Activated B cell treated with CpG ODN at 0.5 μM for 24 hours (primary cell): ENCODE measurements at regions of chr2 and their contacts with region 1.

Region 1: DNA sequence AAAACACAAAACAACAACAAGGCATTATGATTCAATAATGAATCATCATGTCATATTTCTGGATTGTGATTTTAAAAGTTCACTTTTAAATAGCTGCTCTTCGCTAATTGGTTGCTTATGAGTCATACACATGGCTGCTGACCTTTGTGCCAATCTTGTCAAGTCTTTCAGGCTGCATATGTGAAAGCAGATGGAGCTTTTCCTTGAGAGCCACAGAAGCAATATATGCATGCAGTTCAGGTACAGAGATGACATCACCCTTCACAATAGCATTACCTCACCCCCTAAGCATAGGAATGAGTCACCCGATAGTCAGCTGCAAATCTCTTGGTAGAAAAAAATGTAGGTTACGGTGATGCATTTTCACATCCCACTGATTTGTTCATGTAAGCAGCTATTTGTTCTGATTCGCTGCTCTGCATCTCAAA is 27.2 kb downstream of the EIF2AK3 start:
- DNase-seq: no peak
- ATAC-seq: peak; percentile 94
- H3K4me3 Mint-ChIP-seq: peak overlapping the region; percentile 67
- H3K27ac Mint-ChIP-seq: peak overlapping the region; percentile 90
- H3K4me1 Mint-ChIP-seq: peaks cover 89% of the 10 kb centered on the region
- H3K27me3 Mint-ChIP-seq: no peaks in the 10 kb centered on the region
- CTCF ChIP-seq: no peak

Region 2: DNA sequence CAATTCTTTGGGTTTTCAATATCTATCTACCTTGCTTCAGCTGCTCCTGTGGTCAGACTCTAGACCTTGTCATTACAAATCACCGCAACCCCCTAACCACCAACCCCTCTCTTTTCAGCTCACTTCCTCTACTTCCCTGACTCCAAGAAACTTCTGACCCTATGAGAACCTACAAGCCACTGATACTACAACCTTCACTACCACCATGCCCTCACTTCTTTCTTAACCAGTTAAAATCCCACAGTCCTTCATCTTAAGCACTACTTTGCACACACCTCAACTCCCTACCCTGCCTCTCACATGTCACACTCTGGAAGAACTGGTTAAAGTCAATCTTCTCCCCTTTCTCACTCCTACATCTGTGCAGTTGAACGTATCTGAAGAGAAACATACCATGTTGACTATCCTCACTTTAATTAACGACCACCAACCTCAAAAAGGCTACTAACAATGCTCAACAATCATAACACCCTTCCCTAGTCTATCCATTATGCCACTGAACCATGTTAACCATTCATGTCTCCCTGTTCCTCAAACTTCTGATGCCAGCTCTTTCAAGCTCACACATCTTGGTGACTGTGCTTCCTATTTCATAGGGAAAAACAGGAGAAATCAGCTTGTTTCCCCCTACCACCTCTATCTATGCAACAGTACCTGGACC is 14.6 kb after region 1 on chr2:
- CTCF ChIA-PET with region 1: no interaction called
- POLR2A ChIA-PET with region 1: interaction called, 7 read pairs
- intact Hi-C with region 1: loop called (anchors 2 kb)
- DNase-seq: no peak
- ATAC-seq: peak; percentile 60
- H3K4me3 Mint-ChIP-seq: no peak overlapping the region
- H3K27ac Mint-ChIP-seq: no peak overlapping the region
- H3K4me1 Mint-ChIP-seq: peaks cover 52% of the 10 kb centered on the region
- H3K27me3 Mint-ChIP-seq: no peaks in the 10 kb centered on the region
- CTCF ChIP-seq: no peak

Region 3: DNA sequence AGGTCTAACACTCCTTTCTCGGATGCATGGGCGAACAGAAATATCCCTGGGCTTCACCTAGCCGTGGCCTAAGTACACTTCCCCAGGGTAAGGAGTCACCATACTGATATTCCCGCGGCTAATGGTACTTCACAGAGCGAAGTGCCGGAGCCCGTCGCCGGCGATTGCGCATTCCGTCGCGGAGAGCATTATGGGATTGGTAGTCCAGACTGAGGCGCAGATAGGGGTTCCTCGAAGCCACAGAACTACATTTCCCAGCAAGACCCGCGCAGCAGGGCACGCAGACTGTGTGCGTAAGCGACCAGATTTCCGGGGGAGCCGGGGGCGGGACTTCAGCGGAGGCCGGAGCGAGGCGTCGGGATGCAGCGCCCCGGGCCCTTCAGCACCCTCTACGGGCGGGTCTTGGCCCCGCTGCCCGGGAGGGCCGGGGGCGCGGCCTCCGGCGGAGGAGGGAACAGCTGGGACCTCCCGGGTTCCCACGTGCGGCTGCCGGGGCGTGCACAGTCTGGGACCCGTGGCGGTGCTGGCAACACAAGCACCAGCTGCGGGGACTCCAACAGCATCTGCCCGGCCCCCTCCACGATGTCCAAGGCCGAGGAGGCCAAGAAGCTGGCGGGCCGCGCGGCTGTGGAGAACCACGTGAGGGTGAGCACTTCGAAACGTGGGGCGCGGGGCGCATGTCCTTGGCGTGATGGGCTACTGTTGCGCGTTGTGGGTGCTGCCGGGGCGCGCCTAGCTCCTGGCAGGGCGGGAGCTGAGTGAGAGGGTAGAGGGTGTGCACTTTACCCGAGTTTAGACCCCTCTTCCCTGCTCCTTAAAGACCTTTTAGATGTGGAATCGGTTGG is 91.5 kb after region 1 on chr2 and contains the start of gene RPIA:
- CTCF ChIA-PET with region 1: interaction called, 3 read pairs
- POLR2A ChIA-PET with region 1: interaction called, 3 read pairs
- intact Hi-C with region 1: loop called (anchors 1 kb)
- DNase-seq: peak; percentile 94
- ATAC-seq: peak; percentile 94
- H3K4me3 Mint-ChIP-seq: peak within 1 kb of the TSS; percentile 96
- H3K27ac Mint-ChIP-seq: peak within 1 kb of the TSS; percentile 86
- H3K4me1 Mint-ChIP-seq: peaks cover 44% of the 10 kb centered on the region
- H3K27me3 Mint-ChIP-seq: no peaks in the 10 kb centered on the region
- CTCF ChIP-seq: no peak
- total RNA-seq, gene RPIA: 34.9 and 35.9 TPM in 2 replicates

Region 4: GRCh38 chr2:88711903-88712302 is 111.9 kb after region 1 on chr2:
- CTCF ChIA-PET with region 1: no interaction called
- POLR2A ChIA-PET with region 1: no interaction called
- intact Hi-C with region 1: no loop called
- DNase-seq: no peak
- ATAC-seq: no peak
- H3K4me3 Mint-ChIP-seq: no peak overlapping the region
- H3K27ac Mint-ChIP-seq: no peak overlapping the region
- H3K4me1 Mint-ChIP-seq: no peaks in the 10 kb centered on the region
- H3K27me3 Mint-ChIP-seq: no peaks in the 10 kb centered on the region
- CTCF ChIP-seq: no peak

Region 5: GRCh38 chr2:88838165-88838635 is 238.1 kb after region 1 on chr2:
- CTCF ChIA-PET with region 1: no interaction called
- POLR2A ChIA-PET with region 1: no interaction called
- intact Hi-C with region 1: loop called (anchors 5 kb)
- DNase-seq: peak; percentile 47
- ATAC-seq: peak; percentile 83
- H3K4me3 Mint-ChIP-seq: peak overlapping the region; percentile 60
- H3K27ac Mint-ChIP-seq: peak overlapping the region; percentile 97
- H3K4me1 Mint-ChIP-seq: peaks cover 90% of the 10 kb centered on the region
- H3K27me3 Mint-ChIP-seq: no peaks in the 10 kb centered on the region
- CTCF ChIP-seq: no peak